Left ventricle myocardium inferior (tissue), 1 donor: ENCODE measurements at regions of chr5 and their contacts with region 1.

Region 1: DNA sequence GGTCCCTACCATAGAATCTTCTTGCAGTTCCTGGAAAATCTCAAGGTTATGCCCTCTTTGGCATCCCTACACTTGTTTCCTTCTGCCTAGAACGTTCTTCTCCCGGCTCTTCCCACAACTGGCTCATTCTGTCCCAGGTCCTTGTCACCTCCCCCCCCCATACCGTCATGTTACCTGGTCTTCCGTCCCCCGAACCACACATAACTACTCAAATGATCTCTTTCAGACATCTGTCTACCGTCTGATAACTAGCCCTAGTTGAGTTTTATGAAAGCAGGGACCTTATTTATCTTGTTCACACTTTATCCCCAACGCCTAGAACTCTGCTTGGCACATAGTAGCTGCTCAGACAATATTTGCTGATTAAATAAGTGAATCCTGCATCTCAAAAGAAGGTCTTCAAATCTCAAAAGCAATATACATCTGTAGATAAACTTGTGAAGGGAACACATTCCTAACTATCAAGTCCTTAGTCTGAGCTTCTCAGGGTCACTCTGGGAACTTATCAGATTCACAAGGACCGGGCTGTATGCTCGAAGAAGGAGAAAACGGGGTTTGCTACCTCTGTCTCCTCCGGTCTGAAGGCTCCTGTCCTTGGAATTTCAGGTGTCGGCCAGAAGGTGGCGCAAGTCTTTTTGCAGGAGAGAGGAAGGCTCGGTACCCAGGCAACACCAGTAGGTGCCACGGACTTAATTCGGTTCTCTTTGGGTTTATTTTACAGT is 30.0 kb downstream of the LCP2 start:
- DNase-seq: peak; percentile 69
- H3K4me3 ChIP-seq: peak overlapping the region; percentile 28
- H3K27ac ChIP-seq: peak overlapping the region; percentile 48
- H3K4me1 ChIP-seq: peaks cover 24% of the 10 kb centered on the region
- H3K27me3 ChIP-seq: peaks cover 32% of the 10 kb centered on the region
- CTCF ChIP-seq: peak; percentile 86

Region 2: DNA sequence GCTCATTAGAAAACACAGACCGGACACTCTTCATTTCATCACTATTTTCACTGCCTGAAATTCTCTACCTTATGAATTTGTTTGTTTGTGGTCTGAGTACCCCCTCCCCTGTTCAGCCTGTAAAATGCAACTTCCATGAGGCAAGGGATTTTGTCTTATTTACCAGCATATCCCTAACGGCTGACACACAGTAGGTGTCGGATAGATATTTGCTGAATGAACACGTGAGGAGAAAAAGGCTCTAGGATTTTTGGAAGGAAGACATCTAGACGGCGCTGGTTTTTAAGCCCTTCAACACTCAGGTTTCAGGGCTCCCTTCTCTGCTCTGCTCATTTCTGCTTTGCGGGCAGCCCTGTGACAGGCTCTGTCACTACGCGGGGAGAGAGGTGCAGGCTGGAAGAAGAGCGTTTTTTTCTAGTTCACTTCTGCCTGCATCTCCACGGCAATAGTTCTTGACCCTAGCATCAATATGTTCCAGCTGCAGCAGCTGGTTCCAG is 80.6 kb after region 1 on chr5:
- intact Hi-C with region 1: loop called (anchors 5 kb)
- DNase-seq: no peak
- H3K4me3 ChIP-seq: no peak overlapping the region
- H3K27ac ChIP-seq: no peak overlapping the region
- H3K4me1 ChIP-seq: peaks cover 6% of the 10 kb centered on the region
- H3K27me3 ChIP-seq: peaks cover 59% of the 10 kb centered on the region
- CTCF ChIP-seq: peak; percentile 52